ENCODE measurements at regions of chr5 and their contacts with region 1.

Region 1: DNA sequence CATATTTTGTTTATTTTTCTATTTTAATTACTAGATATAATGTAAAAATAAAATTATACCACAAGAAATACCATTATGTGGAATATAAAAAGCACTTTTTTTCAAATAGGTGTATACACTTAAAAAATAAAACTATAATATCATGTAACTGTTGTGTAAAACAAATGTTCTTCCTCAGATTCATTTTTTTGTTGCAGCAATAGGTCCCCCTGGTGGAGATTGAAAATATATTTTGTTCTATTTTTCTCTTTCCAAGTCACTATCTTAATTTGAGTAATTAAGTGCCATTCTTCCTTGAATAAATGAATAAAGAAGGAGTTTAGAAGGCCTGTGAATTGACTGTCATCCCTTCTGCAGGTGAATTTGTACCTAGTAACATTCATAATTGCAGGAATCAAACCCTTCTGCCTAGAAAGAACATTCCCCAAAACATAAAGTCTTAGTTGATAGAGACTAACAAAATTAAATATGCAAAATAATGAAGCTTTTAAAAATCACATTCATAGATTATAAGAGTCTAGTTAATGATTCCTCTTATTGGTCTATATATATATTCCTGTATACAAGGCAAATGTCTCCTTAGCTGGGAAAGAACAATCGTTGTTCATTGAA is 23.4 kb downstream of the CETN3 start:
- ATAC-seq: no peak
- H3K4me3 ChIP-seq: no peak overlapping the region
- H3K27ac ChIP-seq: no peak overlapping the region
- H3K4me1 ChIP-seq: no peaks in the 10 kb centered on the region

Region 2: GRCh38 chr5:90293931-90294330 is 92.3 kb before region 1 on chr5:
- in situ Hi-C with region 1: loop called in 1 of 9 experiments (anchors 25 kb)
- ATAC-seq: peak; percentile 47 to 99 (median 85)
- H3K4me3 ChIP-seq: no peak overlapping the region
- H3K27ac ChIP-seq: no peak overlapping the region
- H3K4me1 ChIP-seq: peaks cover 0 to 5% of the 10 kb centered on the region in 2 donors

Region 3: DNA sequence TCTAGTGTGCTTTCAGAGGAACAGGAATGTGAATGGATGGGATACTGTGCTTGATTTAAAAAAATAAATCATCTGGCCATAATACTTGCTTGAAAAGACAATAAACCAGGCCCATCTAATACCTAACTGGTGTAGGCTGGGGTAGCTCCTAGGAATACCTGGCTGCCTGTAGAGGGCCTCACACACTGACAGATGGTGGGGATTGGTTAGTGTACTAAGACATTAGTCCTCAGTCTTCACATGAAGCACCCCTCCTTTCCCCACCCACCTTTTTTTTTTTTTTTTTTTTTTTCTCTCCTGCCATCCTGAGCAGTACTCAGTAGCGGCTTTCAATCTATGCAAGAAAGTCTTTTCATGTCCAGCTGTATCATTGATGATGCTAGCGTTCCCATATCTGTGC is 302.9 kb after region 1 on chr5:
- in situ Hi-C with region 1: no loop called
- ATAC-seq: peak in 5 of 8 experiments; percentile 57 to 83 (median 62)
- H3K4me3 ChIP-seq: no peak overlapping the region
- H3K27ac ChIP-seq: no peak overlapping the region
- H3K4me1 ChIP-seq: peaks cover 4 to 10% of the 10 kb centered on the region in 2 donors

Measured in motor neuron (in vitro differentiated cells).